ENCODE measurements at regions of chr5 and their contacts with region 1.

Region 1: DNA sequence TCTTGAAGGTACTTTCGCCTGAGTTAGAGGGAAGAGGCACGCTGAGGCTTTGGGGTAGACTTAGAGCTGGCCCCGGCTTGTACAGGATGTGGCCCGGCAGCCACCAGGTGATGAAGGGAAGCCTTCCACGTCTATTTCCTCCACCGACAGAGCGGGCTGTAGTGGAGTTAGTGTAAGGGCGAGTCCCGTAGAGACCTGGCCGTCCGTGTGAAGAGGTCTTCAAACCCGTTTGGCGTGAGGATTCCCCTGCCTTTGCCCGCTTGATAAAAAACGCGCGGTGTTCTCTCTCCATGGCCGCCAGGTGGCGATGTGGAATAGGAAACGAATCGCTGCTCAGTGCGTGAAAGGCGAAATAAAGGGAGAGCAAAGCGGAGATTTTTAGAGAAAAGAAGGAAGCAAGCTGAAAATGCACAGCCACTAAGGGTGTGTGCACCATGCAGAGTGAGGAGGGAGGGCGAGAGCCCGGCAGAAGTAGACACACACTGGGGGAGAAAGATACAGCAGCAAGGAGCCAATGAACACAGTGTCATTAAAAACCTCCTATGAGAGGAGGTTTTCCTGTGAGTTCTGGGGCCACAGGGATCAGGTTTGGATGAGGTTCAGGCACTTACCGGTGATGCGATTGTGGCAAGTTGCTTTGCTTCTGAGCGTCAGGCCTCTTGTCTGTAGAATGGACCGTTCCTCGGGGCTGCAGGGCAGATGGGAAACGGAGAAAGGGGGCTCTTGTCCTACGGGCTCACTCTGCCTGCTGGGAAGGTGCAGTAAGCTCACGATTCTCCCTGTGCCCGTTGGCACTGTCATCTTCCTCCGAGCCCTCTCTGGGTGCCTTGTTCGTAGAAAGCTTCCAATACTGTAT is 34.2 kb downstream of the STC2 start:
- DNase-seq: peak; percentile 75
- H3K4me3 ChIP-seq: no peak overlapping the region
- H3K27ac ChIP-seq: no peak overlapping the region
- H3K4me1 ChIP-seq: peaks cover 22% of the 10 kb centered on the region
- H3K27me3 ChIP-seq: no peaks in the 10 kb centered on the region
- CTCF ChIP-seq: peak; percentile 77 to 85
- POLR2A ChIP-seq: no peak

Region 2: DNA sequence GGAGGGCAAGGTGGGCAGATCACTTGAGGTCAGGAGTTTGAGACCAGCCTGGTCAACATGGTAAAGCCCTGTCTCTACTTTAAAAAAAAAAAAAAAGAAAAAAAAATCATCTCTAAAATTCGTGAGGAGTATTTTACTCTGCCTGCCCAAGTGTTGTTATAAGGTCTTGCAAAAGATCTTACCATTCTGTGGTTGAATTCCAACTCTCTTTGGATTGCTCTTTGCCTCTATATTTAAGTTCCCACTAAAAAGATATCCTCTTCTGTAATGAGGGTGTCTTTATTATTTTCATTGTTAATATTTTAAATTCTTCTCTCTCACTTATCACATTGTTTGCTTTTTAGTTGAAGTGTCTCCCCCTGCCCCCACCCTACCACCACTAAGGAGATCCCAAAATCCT is 204.5 kb before region 1 on chr5:
- CTCF ChIA-PET with region 1: no interaction called
- POLR2A ChIA-PET with region 1: no interaction called
- dilution Hi-C with region 1: no loop called
- intact Hi-C with region 1: no loop called
- DNase-seq: no peak
- H3K4me3 ChIP-seq: no peak overlapping the region
- H3K27ac ChIP-seq: no peak overlapping the region
- H3K4me1 ChIP-seq: peaks cover 18% of the 10 kb centered on the region
- H3K27me3 ChIP-seq: no peaks in the 10 kb centered on the region
- CTCF ChIP-seq: no peak
- POLR2A ChIP-seq: no peak

Region 3: GRCh38 chr5:173210877-173211276 is 83.2 kb before region 1 on chr5:
- CTCF ChIA-PET with region 1: no interaction called
- POLR2A ChIA-PET with region 1: no interaction called
- dilution Hi-C with region 1: no loop called
- intact Hi-C with region 1: no loop called
- DNase-seq: no peak
- H3K4me3 ChIP-seq: no peak overlapping the region
- H3K27ac ChIP-seq: no peak overlapping the region
- H3K4me1 ChIP-seq: no peaks in the 10 kb centered on the region
- H3K27me3 ChIP-seq: no peaks in the 10 kb centered on the region
- CTCF ChIP-seq: no peak
- POLR2A ChIP-seq: no peak

Region 4: GRCh38 chr5:173227636-173228035 is 66.4 kb before region 1 on chr5:
- CTCF ChIA-PET with region 1: no interaction called
- POLR2A ChIA-PET with region 1: no interaction called
- dilution Hi-C with region 1: no loop called
- intact Hi-C with region 1: no loop called
- DNase-seq: no peak
- H3K4me3 ChIP-seq: no peak overlapping the region
- H3K27ac ChIP-seq: no peak overlapping the region
- H3K4me1 ChIP-seq: peaks cover 4% of the 10 kb centered on the region
- H3K27me3 ChIP-seq: peaks cover 57 to 61% of the 10 kb centered on the region in 2 experiments
- CTCF ChIP-seq: no peak
- POLR2A ChIP-seq: no peak

Region 5: DNA sequence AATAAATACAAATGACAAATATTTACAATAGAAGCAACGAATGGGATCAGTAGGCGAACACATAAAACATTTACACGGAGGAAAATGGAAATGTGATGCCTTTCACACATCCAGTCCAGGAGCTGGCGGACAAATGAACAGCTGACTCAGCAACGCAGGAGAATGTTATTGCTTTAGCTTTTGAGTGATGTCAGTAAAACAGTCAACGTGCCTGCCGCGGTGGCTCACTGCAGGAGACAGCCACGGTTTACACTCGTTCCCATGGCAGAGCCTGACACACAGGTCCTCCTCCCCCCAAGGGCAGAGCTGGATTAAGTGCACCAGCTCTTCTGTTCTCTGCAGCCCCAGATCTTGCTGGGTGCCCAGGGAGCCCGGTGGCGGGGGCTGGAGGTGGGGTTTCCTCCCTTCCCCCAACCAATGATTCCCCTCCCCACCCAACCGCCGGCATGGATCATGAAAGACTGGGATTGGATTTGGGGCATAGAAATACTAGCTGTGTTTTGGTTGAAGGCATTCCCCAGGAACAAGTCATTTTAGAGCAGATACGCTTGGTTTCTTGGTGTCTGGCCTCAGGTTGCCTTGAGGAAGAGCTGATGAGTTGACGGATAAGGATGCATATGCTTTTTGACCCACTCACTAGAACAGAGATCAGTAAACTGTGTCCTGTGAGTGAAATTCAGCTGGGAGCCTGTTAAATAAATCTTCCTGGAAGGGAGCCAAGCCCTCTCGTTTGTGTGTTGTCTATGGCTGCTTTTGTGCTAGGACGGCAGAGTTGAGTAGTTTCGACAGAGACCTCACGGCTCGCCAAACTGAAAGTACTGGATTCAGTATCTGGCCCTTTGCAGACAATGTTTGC is 21.7 kb after region 1 on chr5:
- CTCF ChIA-PET with region 1: interaction called, 33 read pairs
- POLR2A ChIA-PET with region 1: no interaction called
- dilution Hi-C with region 1: no loop called
- intact Hi-C with region 1: no loop called
- DNase-seq: no peak
- H3K4me3 ChIP-seq: no peak overlapping the region
- H3K27ac ChIP-seq: no peak overlapping the region
- H3K4me1 ChIP-seq: no peaks in the 10 kb centered on the region
- H3K27me3 ChIP-seq: no peaks in the 10 kb centered on the region
- CTCF ChIP-seq: no peak
- POLR2A ChIP-seq: no peak

Region 6: GRCh38 chr5:173324115-173325001 is 30.3 kb after region 1 on chr5:
- CTCF ChIA-PET with region 1: interaction called, 428 read pairs
- POLR2A ChIA-PET with region 1: no interaction called
- dilution Hi-C with region 1: no loop called
- intact Hi-C with region 1: loop called (anchors 1 kb)
- DNase-seq: peak; percentile 42
- H3K4me3 ChIP-seq: peak overlapping the region in 1 of 3 experiments; percentile 1
- H3K27ac ChIP-seq: peak overlapping the region; percentile 87
- H3K4me1 ChIP-seq: peaks cover 34% of the 10 kb centered on the region
- H3K27me3 ChIP-seq: no peaks in the 10 kb centered on the region
- CTCF ChIP-seq: no peak
- POLR2A ChIP-seq: no peak

Region 7: GRCh38 chr5:173396311-173396993 is 102.4 kb after region 1 on chr5:
- CTCF ChIA-PET with region 1: interaction called, 10 read pairs
- POLR2A ChIA-PET with region 1: no interaction called
- dilution Hi-C with region 1: no loop called
- intact Hi-C with region 1: no loop called
- DNase-seq: no peak
- H3K4me3 ChIP-seq: no peak overlapping the region
- H3K27ac ChIP-seq: no peak overlapping the region
- H3K4me1 ChIP-seq: no peaks in the 10 kb centered on the region
- H3K27me3 ChIP-seq: no peaks in the 10 kb centered on the region
- CTCF ChIP-seq: no peak
- POLR2A ChIP-seq: no peak

Region 8: DNA sequence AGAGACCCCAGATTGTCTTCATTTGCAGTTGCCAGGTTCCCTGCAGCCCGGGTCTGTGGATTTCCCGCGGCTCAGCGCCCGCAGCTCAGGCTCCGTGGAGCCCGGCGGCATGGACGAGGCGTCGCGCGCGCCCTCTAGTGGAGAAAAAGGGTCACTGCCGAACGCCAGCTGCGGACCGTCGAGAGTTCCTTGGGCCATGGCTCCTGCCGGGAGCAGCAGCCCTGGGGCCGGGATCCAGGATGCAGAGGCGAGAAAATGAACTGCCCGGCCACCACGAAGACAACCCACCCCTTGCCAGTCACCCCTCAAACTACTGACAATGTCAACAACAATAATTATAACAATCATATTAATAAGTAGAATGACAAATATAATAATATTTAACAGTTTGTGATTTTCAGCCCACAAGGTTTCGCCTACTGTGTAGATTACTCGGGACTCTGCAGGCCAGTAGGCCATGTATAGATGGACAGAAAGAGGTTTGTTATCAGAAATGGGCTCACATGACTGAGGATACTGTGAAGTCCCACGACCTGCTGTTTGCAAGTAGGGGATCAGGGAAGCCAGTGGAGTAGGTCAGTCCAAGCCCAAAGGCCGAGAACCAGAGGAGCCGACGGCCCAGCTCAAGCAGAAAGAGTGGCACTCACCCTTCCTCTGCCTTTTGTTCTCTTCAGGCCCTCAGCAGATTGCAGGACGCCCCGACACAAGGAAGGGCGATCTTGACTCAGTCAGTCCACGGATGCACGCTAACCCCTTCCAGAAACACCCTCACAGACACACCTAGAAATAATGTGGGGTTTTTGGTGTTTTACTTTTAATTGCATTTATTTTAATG is 279.3 kb after region 1 on chr5:
- CTCF ChIA-PET with region 1: interaction called, 235 read pairs
- POLR2A ChIA-PET with region 1: no interaction called
- dilution Hi-C with region 1: no loop called
- intact Hi-C with region 1: loop called (anchors 1 kb)
- DNase-seq: peak; percentile 65
- H3K4me3 ChIP-seq: no peak overlapping the region
- H3K27ac ChIP-seq: no peak overlapping the region
- H3K4me1 ChIP-seq: peaks cover 2% of the 10 kb centered on the region
- H3K27me3 ChIP-seq: peaks cover 0 to 4% of the 10 kb centered on the region in 2 experiments
- CTCF ChIP-seq: peak; percentile 94 to 98
- POLR2A ChIP-seq: no peak

Region 9: DNA sequence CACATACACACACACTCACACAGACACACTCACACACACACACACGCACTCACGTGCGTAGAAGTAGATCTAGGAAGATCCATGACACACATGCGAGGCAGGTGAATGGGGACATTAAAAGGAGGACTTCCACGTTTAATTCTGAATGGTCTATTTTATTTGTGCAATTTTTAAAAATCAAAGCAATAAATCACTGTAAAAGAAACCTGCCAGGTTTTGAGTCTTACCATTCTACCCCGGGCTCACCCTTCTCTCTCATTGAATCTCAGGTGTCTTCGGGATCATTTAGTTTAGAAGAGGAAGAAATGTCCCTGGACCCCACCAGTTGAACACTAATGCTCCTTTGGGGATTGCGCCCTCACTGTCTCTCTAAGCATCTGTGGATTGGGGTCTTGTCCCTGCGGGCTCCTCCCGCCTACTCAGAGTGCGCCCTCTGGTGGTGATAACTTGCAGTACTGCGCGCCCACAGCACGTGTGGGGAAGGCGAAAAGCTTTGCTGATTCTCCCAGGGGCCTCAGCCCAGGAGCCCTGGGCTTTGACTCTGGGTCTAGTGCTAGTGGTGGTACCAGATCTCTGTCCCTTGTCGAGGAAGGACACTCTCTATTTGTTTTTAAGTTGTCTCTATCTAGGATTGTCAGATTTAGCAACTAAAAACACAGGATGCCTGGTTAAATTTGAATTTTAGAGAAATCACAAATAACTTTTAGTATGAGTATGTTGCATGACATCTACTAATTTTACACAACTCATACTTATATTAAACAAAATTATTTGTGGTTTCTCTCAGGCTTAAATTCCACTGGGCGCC is 287.6 kb after region 1 on chr5:
- CTCF ChIA-PET with region 1: interaction called, 140 read pairs
- POLR2A ChIA-PET with region 1: no interaction called
- dilution Hi-C with region 1: no loop called
- intact Hi-C with region 1: loop called (anchors 1 kb)
- DNase-seq: peak; percentile 33
- H3K4me3 ChIP-seq: no peak overlapping the region
- H3K27ac ChIP-seq: no peak overlapping the region
- H3K4me1 ChIP-seq: no peaks in the 10 kb centered on the region
- H3K27me3 ChIP-seq: peaks cover 2 to 6% of the 10 kb centered on the region in 2 experiments
- CTCF ChIP-seq: peak; percentile 75 to 87
- POLR2A ChIP-seq: no peak

Measured in endothelial cell of umbilical vein (primary cell).